ENCODE measurements at regions of chr16 and their contacts with region 1.

Region 1: DNA sequence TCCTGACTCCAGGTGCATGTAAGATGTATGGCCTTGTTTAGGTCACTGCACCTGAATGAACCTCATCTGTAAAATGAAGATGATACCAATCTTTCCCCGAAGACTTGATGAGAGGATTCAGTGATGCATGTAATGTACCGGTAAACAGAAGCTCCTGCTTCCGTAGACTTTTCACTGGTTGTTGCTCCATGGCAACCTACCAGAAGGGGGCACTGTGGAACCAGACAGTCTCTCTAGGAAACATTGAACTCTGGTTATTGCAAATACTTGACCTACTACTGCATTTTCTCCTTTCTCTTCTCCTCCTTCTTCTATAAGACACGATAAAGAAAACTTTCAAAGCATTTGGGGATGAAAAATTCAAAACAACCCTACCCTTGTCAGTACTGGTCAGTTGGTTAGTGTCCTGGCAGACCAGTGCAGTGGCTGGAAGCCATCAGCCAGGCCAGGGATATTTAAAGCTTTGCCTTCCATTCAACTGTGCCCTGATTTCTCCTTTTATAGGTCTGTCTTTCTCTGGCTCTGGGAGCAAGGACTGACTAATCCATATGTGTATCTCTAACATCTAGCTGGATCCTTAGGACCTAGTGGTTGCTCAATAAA is 667.4 kb upstream of the SALL1 start:
- DNase-seq: peak; percentile 44
- H3K4me3 ChIP-seq: no peak overlapping the region
- H3K27ac ChIP-seq: no peak overlapping the region
- H3K4me1 ChIP-seq: no peaks in the 10 kb centered on the region
- H3K27me3 ChIP-seq: peaks cover 3% of the 10 kb centered on the region
- CTCF ChIP-seq: peak; percentile 86 to 92

Region 2: DNA sequence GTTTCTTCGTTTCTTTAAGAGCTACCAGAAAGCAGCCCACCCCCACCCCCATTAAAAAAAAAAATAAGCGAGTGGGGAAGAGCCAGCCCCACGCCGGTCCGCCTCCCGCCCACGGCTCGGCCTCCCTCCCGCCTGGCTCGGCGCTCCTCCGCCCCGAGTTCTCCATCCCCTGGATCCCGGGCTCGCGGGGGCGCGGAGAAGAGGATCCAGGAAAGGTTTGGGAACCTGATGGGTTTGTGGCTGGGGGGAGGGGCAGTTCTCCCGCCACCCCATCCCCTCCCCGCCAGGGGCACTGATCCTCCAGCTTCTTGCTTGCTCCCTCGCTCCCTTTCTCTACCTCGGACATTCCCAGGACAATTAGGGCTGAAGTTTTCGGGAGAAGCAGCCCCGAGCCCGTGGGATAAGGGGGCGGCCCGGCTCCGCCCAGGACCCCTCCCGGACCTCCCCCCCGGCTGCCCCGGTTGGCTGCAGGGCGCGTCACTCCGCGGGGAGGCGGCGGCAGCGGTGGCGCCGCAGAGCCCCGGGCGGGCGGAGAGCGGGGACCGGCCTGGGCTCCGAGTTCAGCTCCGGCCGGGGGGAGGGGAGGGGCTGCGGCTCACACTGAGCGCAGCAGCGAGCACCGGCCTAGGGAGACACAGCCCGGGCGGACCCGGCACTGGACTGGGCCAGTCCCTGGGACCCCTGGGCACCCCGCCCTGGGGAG is 666.3 kb before region 1 on chr16:
- CTCF ChIA-PET with region 1: interaction called, 14 read pairs
- dilution Hi-C with region 1: no loop called
- in situ Hi-C with region 1: no loop called
- intact Hi-C with region 1: no loop called
- DNase-seq: no peak
- H3K4me3 ChIP-seq: peak overlapping the region; percentile 23 to 43 (median 41)
- H3K27ac ChIP-seq: no peak overlapping the region
- H3K4me1 ChIP-seq: peaks cover 23% of the 10 kb centered on the region
- H3K27me3 ChIP-seq: peaks cover 62% of the 10 kb centered on the region
- CTCF ChIP-seq: no peak

Region 3: GRCh38 chr16:51797669-51798259 is 20.7 kb before region 1 on chr16:
- CTCF ChIA-PET with region 1: no interaction called
- dilution Hi-C with region 1: no loop called
- in situ Hi-C with region 1: no loop called
- intact Hi-C with region 1: no loop called
- DNase-seq: no peak
- H3K4me3 ChIP-seq: no peak overlapping the region
- H3K27ac ChIP-seq: no peak overlapping the region
- H3K4me1 ChIP-seq: no peaks in the 10 kb centered on the region
- H3K27me3 ChIP-seq: peaks cover 4% of the 10 kb centered on the region
- CTCF ChIP-seq: no peak

Region 4: GRCh38 chr16:51971184-51971583 is 152.7 kb after region 1 on chr16:
- CTCF ChIA-PET with region 1: interaction called, 19 read pairs
- dilution Hi-C with region 1: no loop called
- in situ Hi-C with region 1: no loop called
- intact Hi-C with region 1: loop called (anchors 1 kb)
- DNase-seq: peak; percentile 23
- H3K4me3 ChIP-seq: no peak overlapping the region
- H3K27ac ChIP-seq: no peak overlapping the region
- H3K4me1 ChIP-seq: no peaks in the 10 kb centered on the region
- H3K27me3 ChIP-seq: peaks cover 3% of the 10 kb centered on the region
- CTCF ChIP-seq: peak; percentile 61 to 81

Region 5: DNA sequence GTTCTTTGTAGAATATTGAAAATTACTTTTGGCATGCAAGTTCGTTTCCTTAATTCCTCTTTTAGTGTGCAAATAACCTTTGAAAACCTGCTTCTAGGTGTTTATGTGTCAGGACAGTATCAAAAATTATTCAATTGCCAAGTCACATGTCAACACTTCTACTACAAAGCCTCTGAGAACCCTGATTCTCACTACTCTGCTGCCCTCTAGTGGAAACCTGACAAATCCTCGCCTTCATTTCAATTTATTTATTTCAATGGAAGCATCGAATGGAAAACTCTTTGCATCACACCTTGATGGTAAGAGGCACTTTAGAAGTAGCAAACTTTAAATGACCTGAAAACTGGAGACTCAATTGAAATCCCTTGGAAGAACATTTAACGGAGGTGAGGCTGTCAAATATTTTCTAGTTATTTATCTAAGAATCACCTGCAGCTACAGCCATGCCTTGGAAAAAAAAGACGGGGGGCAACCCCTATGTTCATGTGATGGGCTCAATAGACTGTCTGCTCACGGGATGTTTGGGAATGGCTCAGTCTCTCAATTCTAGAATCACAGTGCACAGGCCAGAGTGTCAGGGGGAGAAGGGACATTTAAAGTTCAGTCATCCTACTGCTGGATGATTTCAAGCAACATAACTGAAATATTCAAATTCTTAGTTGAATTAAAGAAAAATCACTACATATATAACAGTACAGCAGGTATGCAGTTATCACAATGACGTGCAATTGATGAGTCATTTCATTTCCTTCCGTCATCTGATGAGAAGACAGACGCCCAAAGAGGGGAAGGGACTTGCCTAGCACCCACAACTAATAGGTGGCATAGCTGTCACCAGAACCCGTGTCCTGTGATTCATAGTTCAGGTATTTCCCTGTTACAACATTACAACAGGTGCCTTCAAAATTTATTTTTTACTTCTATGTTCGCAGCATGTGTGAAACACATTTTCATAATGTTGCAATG is 164.6 kb after region 1 on chr16:
- CTCF ChIA-PET with region 1: interaction called, 3 read pairs
- dilution Hi-C with region 1: no loop called
- in situ Hi-C with region 1: loop called (anchors 5 to 10 kb)
- intact Hi-C with region 1: loop called (anchors 1 kb)
- DNase-seq: peak; percentile 42
- H3K4me3 ChIP-seq: no peak overlapping the region
- H3K27ac ChIP-seq: no peak overlapping the region
- H3K4me1 ChIP-seq: no peaks in the 10 kb centered on the region
- H3K27me3 ChIP-seq: peaks cover 4% of the 10 kb centered on the region
- CTCF ChIP-seq: peak; percentile 69 to 79